Sigmoid colon (tissue), 7 donors: ENCODE measurements at regions of chr11 and their contacts with region 1.

Region 1: GRCh38 chr11:119205574-119206510 is at the start of gene CBL:
- DNase-seq: peak; percentile 98
- H3K4me3 ChIP-seq: peak within 1 kb of the TSS; percentile 72 to 97 (median 92)
- H3K27ac ChIP-seq: peak within 1 kb of the TSS; percentile 94 to 98 (median 96)
- H3K4me1 ChIP-seq: peaks cover 0 to 29% (median 20%) of the 10 kb centered on the region in 4 donors
- H3K27me3 ChIP-seq: no peaks in the 10 kb centered on the region
- CTCF ChIP-seq: peak; percentile 81 to 95 (median 86)
- EP300 ChIP-seq: no peak
- POLR2A ChIP-seq: peak; percentile 29 to 46
- total RNA-seq, gene CBL: 11.8 to 17.7 (median 13.1) TPM

Region 2: GRCh38 chr11:119101759-119102423 is 104.0 kb before region 1 on chr11 and contains the start of gene DPAGT1:
- intact Hi-C with region 1: loop called (anchors 5 kb)
- DNase-seq: peak; percentile 97
- H3K4me3 ChIP-seq: peak within 1 kb of the TSS; percentile 77 to 82 (median 78)
- H3K27ac ChIP-seq: peak within 1 kb of the TSS; percentile 84 to 92 (median 90)
- H3K4me1 ChIP-seq: peaks cover 0 to 36% (median 32%) of the 10 kb centered on the region in 4 donors
- H3K27me3 ChIP-seq: no peaks in the 10 kb centered on the region
- CTCF ChIP-seq: peak in 1 of 4 experiments; percentile 1
- EP300 ChIP-seq: no peak
- POLR2A ChIP-seq: peak in 1 of 2 donors; percentile 37
- total RNA-seq, gene DPAGT1: 16.1 to 22.1 (median 16.8) TPM

Region 3: GRCh38 chr11:119168471-119169281 is 37.2 kb before region 1 on chr11 and contains the start of gene NLRX1:
- intact Hi-C with region 1: loop called (anchors 1 kb)
- DNase-seq: peak; percentile 93
- H3K4me3 ChIP-seq: peak within 1 kb of the TSS; percentile 79 to 99 (median 94)
- H3K27ac ChIP-seq: peak within 1 kb of the TSS; percentile 95 to 99 (median 98)
- H3K4me1 ChIP-seq: peaks cover 0 to 9% (median 5%) of the 10 kb centered on the region in 4 donors
- H3K27me3 ChIP-seq: no peaks in the 10 kb centered on the region
- CTCF ChIP-seq: peak; percentile 85 to 92 (median 89)
- EP300 ChIP-seq: no peak
- POLR2A ChIP-seq: peak; percentile 69 to 71
- total RNA-seq, gene NLRX1: 10.7 to 21.9 (median 12.6) TPM

Region 4: DNA sequence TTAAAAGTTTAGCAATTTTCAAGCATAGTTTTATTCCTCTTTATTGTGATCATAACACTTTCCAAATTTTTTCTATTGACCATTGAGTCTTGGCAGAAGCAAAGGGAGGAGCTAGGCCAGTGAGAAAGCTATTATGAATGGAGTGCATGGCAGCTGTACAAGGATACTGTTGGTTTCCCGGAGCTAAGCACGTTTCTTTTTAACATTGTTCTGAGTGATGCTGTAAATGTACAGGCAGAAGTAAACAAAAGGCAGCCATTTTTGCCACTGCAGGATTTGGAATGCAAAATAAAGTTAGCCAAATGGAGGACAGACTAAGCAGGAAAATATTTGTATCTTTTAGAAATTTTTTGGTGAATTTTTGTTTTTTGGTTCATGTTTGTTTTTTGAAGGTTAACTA is 16.5 kb after region 1 on chr11:
- intact Hi-C with region 1: no loop called
- DNase-seq: no peak
- H3K4me3 ChIP-seq: no peak overlapping the region
- H3K27ac ChIP-seq: peak overlapping the region in 3 of 4 donors; percentile 15 to 60 (median 36)
- H3K4me1 ChIP-seq: peaks cover 0 to 15% (median 13%) of the 10 kb centered on the region in 4 donors
- H3K27me3 ChIP-seq: no peaks in the 10 kb centered on the region
- CTCF ChIP-seq: no peak
- EP300 ChIP-seq: no peak
- POLR2A ChIP-seq: no peak

Region 5: GRCh38 chr11:119284344-119285157 is 78.7 kb after region 1 on chr11:
- intact Hi-C with region 1: loop called (anchors 2 kb)
- DNase-seq: no peak
- H3K4me3 ChIP-seq: no peak overlapping the region
- H3K27ac ChIP-seq: no peak overlapping the region
- H3K4me1 ChIP-seq: peaks cover 0 to 9% (median 3%) of the 10 kb centered on the region in 4 donors
- H3K27me3 ChIP-seq: no peaks in the 10 kb centered on the region
- CTCF ChIP-seq: peak in 1 of 4 experiments; percentile 31
- EP300 ChIP-seq: no peak
- POLR2A ChIP-seq: no peak

Region 6: GRCh38 chr11:119306373-119306890 is 100.6 kb after region 1 on chr11:
- intact Hi-C with region 1: no loop called
- DNase-seq: no peak
- H3K4me3 ChIP-seq: no peak overlapping the region
- H3K27ac ChIP-seq: peak overlapping the region; percentile 50 to 99 (median 78)
- H3K4me1 ChIP-seq: peaks cover 0 to 23% (median 12%) of the 10 kb centered on the region in 4 donors
- H3K27me3 ChIP-seq: no peaks in the 10 kb centered on the region
- CTCF ChIP-seq: no peak
- EP300 ChIP-seq: peak in 1 of 4 donors; percentile 55
- POLR2A ChIP-seq: no peak

Region 7: DNA sequence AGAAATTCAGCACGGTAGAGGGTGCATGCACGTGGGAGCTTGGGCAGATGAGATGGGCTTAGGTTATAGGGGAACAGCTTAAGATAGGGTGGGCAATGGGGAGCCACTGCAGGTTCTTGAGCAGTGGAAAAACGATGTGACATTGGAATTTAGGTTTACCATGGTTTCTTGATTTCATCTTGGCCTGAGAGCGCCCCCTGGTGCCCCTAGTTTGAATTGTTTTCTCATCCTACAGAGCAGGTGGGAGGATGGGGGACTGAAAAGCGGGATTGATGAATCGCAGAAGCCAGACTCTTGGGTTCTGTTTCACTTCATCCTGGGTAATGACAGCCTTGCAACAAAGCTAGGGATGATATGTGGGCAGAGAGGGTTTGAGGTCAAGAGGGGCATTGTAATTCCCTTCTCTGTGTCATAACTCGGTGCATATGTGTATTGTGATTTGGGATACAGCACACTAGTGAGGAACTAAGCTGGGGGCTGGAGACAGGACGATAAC is 117.7 kb after region 1 on chr11:
- intact Hi-C with region 1: loop called (anchors 1 kb)
- DNase-seq: peak; percentile 91
- H3K4me3 ChIP-seq: no peak overlapping the region
- H3K27ac ChIP-seq: peak overlapping the region; percentile 69 to 99 (median 96)
- H3K4me1 ChIP-seq: peaks cover 0 to 51% (median 44%) of the 10 kb centered on the region in 4 donors
- H3K27me3 ChIP-seq: no peaks in the 10 kb centered on the region
- CTCF ChIP-seq: peak; percentile 78 to 86 (median 84)
- EP300 ChIP-seq: peak in 3 of 4 donors; percentile 13 to 85 (median 58)
- POLR2A ChIP-seq: no peak

Region 8: GRCh38 chr11:119338318-119338907 is 132.6 kb after region 1 on chr11:
- intact Hi-C with region 1: loop called (anchors 1 kb)
- DNase-seq: peak; percentile 88
- H3K4me3 ChIP-seq: peak overlapping the region in 2 of 4 donors; percentile 63 to 73
- H3K27ac ChIP-seq: peak overlapping the region; percentile 80 to 92 (median 84)
- H3K4me1 ChIP-seq: peaks cover 0 to 70% (median 62%) of the 10 kb centered on the region in 4 donors
- H3K27me3 ChIP-seq: peaks cover 0 to 19% (median 12%) of the 10 kb centered on the region in 3 donors
- CTCF ChIP-seq: peak; percentile 74 to 83 (median 78)
- EP300 ChIP-seq: no peak
- POLR2A ChIP-seq: no peak